HCT116 (cell line): ENCODE measurements at regions of chr12 and their contacts with region 1.

Region 1: GRCh38 chr12:77925536-77926108 is 94.9 kb downstream of the NAV3 start:
- DNase-seq: peak; percentile 95
- ATAC-seq: peak; percentile 99
- H3K4me3 ChIP-seq: no peak overlapping the region
- H3K27ac ChIP-seq: no peak overlapping the region
- H3K4me1 ChIP-seq: peaks cover 7 to 8% of the 10 kb centered on the region in 2 experiments; a peak in 3 of 4 replicates
- H3K27me3 ChIP-seq: no peaks in the 10 kb centered on the region
- CTCF ChIP-seq: peak; percentile 98 to 100 (median 99)
- POLR2A ChIP-seq: no peak
- RAD21 ChIP-seq: peak; percentile 98

Region 2: GRCh38 chr12:77724367-77724957 is 201.2 kb before region 1 on chr12:
- CTCF ChIA-PET with region 1: interaction called, 55 read pairs
- POLR2A ChIA-PET with region 1: no interaction called
- RAD21 ChIA-PET with region 1: interaction called, 3 to 12 read pairs
- intact Hi-C with region 1: loop called (anchors 1 kb)
- DNase-seq: peak; percentile 47
- ATAC-seq: peak; percentile 83
- H3K4me3 ChIP-seq: no peak overlapping the region
- H3K27ac ChIP-seq: no peak overlapping the region
- H3K4me1 ChIP-seq: no peaks in the 10 kb centered on the region
- H3K27me3 ChIP-seq: no peaks in the 10 kb centered on the region
- CTCF ChIP-seq: peak; percentile 58 to 98 (median 75)
- POLR2A ChIP-seq: no peak
- RAD21 ChIP-seq: peak; percentile 94

Region 3: GRCh38 chr12:77907936-77908335 is 17.7 kb before region 1 on chr12:
- CTCF ChIA-PET with region 1: interaction called, 41 read pairs
- POLR2A ChIA-PET with region 1: no interaction called
- RAD21 ChIA-PET with region 1: no interaction called
- intact Hi-C with region 1: no loop called
- DNase-seq: no peak
- ATAC-seq: no peak
- H3K4me3 ChIP-seq: no peak overlapping the region
- H3K27ac ChIP-seq: no peak overlapping the region
- H3K4me1 ChIP-seq: no peaks in the 10 kb centered on the region
- H3K27me3 ChIP-seq: no peaks in the 10 kb centered on the region
- CTCF ChIP-seq: no peak
- POLR2A ChIP-seq: no peak
- RAD21 ChIP-seq: no peak

Region 4: GRCh38 chr12:77914081-77914488 is 11.5 kb before region 1 on chr12:
- CTCF ChIA-PET with region 1: interaction called, 41 read pairs
- POLR2A ChIA-PET with region 1: no interaction called
- RAD21 ChIA-PET with region 1: no interaction called
- intact Hi-C with region 1: no loop called
- DNase-seq: no peak
- ATAC-seq: no peak
- H3K4me3 ChIP-seq: no peak overlapping the region
- H3K27ac ChIP-seq: no peak overlapping the region
- H3K4me1 ChIP-seq: no peaks in the 10 kb centered on the region
- H3K27me3 ChIP-seq: no peaks in the 10 kb centered on the region
- CTCF ChIP-seq: peak in 1 of 3 experiments; percentile 13; a peak in 1 of 6 replicates
- POLR2A ChIP-seq: no peak
- RAD21 ChIP-seq: peak; percentile 43